RWPE1 (cell line): ENCODE measurements at regions of chr17 and their contacts with region 1.

Region 1: GRCh38 chr17:74457146-74457819 is 9.2 kb upstream of the CD300A start:
- DNase-seq: peak; percentile 68
- H3K27ac ChIP-seq: peak overlapping the region; percentile 9; the same call in 1 of the 2 replicates
- CTCF ChIP-seq: peak; percentile 96

Region 2: DNA sequence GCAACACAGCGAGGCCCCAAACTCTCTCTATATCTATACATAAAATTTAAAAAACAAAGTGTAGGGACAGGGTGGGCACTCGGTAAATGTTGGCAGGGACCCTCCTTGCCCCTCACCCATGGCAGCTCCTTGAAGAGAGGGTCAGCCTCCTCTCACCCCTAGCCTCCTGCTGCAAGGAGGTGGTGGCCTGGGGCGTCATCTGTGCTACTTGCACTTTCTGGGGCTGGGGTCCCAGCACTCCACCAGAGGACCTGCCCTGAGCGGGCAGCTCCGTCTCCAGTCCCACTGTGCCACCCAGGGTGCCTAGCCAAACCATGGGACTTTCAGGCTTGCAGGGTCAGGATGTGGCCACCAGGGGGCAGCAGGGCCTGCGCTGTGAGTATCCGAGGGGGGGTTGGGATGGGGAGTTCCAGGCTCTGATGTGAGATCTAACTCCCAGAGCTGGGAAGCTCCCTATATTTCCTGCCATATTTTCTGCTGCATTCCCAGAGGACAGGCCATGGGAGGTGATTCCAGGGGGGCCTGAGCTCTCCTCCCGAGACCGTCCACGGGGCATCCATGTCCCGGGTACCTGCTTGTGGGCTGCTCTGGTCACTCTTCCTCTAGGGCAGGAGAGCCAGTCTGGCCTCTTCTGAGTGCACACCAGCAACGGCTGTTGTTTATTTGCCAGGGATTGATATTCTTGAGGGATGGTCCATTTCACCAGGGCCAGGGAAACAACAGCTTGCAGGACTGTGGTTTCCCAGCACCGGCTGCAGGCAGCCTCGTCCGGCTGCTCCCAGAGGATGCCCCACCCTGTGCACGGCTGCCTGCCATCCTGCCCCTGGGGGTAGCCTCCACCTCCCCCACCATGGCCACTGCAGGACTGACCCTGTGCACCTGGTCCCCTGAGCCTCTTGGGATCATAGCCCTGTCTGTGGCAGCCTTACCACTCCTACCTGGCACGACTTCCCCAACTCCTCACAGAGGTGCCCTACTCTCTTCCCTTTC is 88.9 kb before region 1 on chr17:
- CTCF ChIA-PET with region 1: interaction called, 17 read pairs
- POLR2A ChIA-PET with region 1: no interaction called
- DNase-seq: peak; percentile 76
- H3K27ac ChIP-seq: no peak overlapping the region
- CTCF ChIP-seq: peak; percentile 96

Region 3: GRCh38 chr17:74437702-74438101 is 19.6 kb before region 1 on chr17:
- CTCF ChIA-PET with region 1: interaction called, 11 read pairs
- POLR2A ChIA-PET with region 1: interaction called, 6 read pairs
- DNase-seq: no peak
- H3K27ac ChIP-seq: no peak overlapping the region
- CTCF ChIP-seq: peak; percentile 63

Region 4: GRCh38 chr17:74545843-74546230 is 88.6 kb after region 1 on chr17 and contains the start of gene CD300C:
- CTCF ChIA-PET with region 1: no interaction called
- POLR2A ChIA-PET with region 1: no interaction called
- DNase-seq: no peak
- H3K27ac ChIP-seq: no peak within 1 kb of the TSS
- CTCF ChIP-seq: no peak